OCI-LY7 (cell line): ENCODE measurements at regions of chr9 and their contacts with region 1.

Region 1: GRCh38 chr9:35616681-35617459 is 1.3 kb downstream of the CD72 start:
- DNase-seq: peak; percentile 79
- H3K4me3 ChIP-seq: peak overlapping the region; percentile 69
- H3K27ac ChIP-seq: peak overlapping the region; percentile 92
- H3K4me1 ChIP-seq: peaks cover 63% of the 10 kb centered on the region
- CTCF ChIP-seq: peak; percentile 65

Region 2: GRCh38 chr9:35628389-35628991 is 11.6 kb after region 1 on chr9:
- CTCF ChIA-PET with region 1: interaction called, 6 read pairs
- POLR2A ChIA-PET with region 1: interaction called, 37 read pairs
- intact Hi-C with region 1: no loop called
- DNase-seq: no peak
- H3K4me3 ChIP-seq: no peak overlapping the region
- H3K27ac ChIP-seq: no peak overlapping the region
- H3K4me1 ChIP-seq: peaks cover 23% of the 10 kb centered on the region
- CTCF ChIP-seq: no peak

Region 3: GRCh38 chr9:35646533-35647265 is 29.8 kb after region 1 on chr9:
- CTCF ChIA-PET with region 1: interaction called, 21 read pairs
- POLR2A ChIA-PET with region 1: interaction called, 110 read pairs
- intact Hi-C with region 1: loop called (anchors 1 kb)
- DNase-seq: peak; percentile 93
- H3K4me3 ChIP-seq: peak overlapping the region; percentile 92
- H3K27ac ChIP-seq: peak overlapping the region; percentile 89
- H3K4me1 ChIP-seq: peaks cover 46% of the 10 kb centered on the region
- CTCF ChIP-seq: peak; percentile 83

Region 4: DNA sequence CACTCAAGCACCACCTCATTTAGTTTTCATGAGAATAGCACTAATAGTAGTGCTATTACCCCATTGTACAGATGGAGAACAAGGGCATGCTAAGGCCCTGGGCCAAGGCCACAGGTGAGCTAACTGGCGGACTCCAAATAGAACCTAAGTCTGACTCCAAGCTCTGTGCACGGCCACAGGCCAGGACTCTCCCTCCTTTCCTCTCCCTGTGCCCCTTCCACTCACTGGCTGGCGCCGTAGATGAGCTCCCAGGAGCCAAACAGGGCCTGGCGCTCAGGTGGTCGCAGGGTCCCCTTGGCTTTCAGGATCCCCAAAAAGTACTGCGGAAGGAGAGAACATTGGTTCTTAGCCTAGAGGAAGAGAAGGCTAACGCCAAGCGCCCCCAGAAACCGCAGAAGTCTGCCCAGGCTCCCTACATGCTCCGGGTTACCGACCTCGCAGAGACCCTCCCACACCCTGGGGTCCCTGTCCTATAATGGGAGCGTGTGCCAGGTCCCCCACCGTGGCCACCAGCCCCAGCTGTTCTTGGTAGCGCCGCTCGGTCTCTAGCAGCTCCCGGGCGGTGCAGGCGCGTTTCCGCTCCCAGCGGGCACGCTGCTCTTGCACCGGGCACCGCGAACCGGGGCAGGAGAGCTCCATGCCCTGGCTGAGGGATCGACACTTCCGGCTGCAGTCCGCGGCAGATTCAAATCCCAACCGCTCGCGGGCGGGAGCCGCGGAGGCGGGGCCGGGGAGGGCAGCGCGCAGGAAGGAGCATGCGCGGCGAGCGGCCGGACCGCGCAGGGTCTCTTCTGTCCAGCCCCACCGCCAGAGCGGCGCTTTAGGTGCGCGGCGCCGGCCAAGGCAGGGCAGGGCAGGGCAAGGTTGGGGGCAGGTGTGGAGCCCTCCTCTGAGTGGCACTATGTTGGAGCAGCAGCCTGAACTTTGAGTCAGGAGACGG is 47.9 kb after region 1 on chr9 and contains the start of gene ARHGEF39:
- CTCF ChIA-PET with region 1: interaction called, 3 read pairs
- POLR2A ChIA-PET with region 1: interaction called, 28 read pairs
- intact Hi-C with region 1: no loop called
- DNase-seq: peak; percentile 88
- H3K4me3 ChIP-seq: peak within 1 kb of the TSS; percentile 78
- H3K27ac ChIP-seq: peak within 1 kb of the TSS; percentile 85
- H3K4me1 ChIP-seq: peaks cover 62% of the 10 kb centered on the region
- CTCF ChIP-seq: peak; percentile 67
- total RNA-seq, gene ARHGEF39: 22.7 and 30.8 TPM in 2 replicates

Region 5: GRCh38 chr9:35814841-35815543 is 198.1 kb after region 1 on chr9 and contains the start of gene HINT2:
- CTCF ChIA-PET with region 1: no interaction called
- POLR2A ChIA-PET with region 1: interaction called, 4 read pairs
- intact Hi-C with region 1: loop called (anchors 5 kb)
- DNase-seq: peak; percentile 98
- H3K4me3 ChIP-seq: peak within 1 kb of the TSS; percentile 93
- H3K27ac ChIP-seq: peak within 1 kb of the TSS; percentile 82
- H3K4me1 ChIP-seq: peaks cover 29% of the 10 kb centered on the region
- CTCF ChIP-seq: no peak
- total RNA-seq, gene HINT2: 74.3 and 82.5 TPM in 2 replicates